IMR-90 (cell line): ENCODE measurements at regions of chrX and their contacts with region 1.

Region 1: GRCh38 chrX:8815464-8816065 is 14.4 kb upstream of the FAM9A start:
- DNase-seq: peak; percentile 40
- ATAC-seq: peak; percentile 88
- H3K4me3 ChIP-seq: no peak overlapping the region
- H3K27ac ChIP-seq: no peak overlapping the region
- H3K4me1 ChIP-seq: no peaks in the 10 kb centered on the region
- H3K27me3 ChIP-seq: no peaks in the 10 kb centered on the region; the same call in 1 of the 2 replicates
- CTCF ChIP-seq: peak; percentile 67
- POLR2A ChIP-seq: no peak
- RAD21 ChIP-seq: peak; percentile 63

Region 2: DNA sequence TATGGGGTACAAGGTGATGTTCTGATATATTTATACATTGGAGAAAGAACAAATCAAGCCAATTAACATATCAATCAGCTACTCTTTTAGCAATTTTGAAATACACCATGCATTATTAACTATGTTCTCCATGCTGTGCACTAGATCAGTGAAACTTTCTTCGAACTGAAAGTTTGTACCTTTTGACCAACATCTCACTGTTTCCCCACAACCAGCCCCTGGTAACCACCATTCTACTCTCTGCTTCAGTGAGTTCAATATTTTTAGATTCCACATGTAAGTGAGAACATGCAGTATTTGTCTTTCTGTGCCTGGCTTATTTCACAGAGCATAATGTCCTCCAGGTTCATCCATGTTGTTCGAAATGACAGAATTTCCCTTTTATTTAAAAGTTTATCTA is 1218.7 kb before region 1 on chrX:
- CTCF ChIA-PET with region 1: no interaction called
- POLR2A ChIA-PET with region 1: no interaction called
- dilution Hi-C with region 1: no loop called
- in situ Hi-C with region 1: no loop called
- intact Hi-C with region 1: no loop called
- DNase-seq: no peak
- ATAC-seq: no peak
- H3K4me3 ChIP-seq: no peak overlapping the region
- H3K27ac ChIP-seq: no peak overlapping the region
- H3K4me1 ChIP-seq: no peaks in the 10 kb centered on the region
- H3K27me3 ChIP-seq: no peaks in the 10 kb centered on the region
- CTCF ChIP-seq: no peak
- POLR2A ChIP-seq: no peak
- RAD21 ChIP-seq: no peak

Region 3: GRCh38 chrX:7996414-7996813 is 819.2 kb before region 1 on chrX:
- CTCF ChIA-PET with region 1: no interaction called
- POLR2A ChIA-PET with region 1: no interaction called
- dilution Hi-C with region 1: no loop called
- in situ Hi-C with region 1: no loop called
- intact Hi-C with region 1: loop called (anchors 2 kb)
- DNase-seq: peak; percentile 40
- ATAC-seq: peak; percentile 60
- H3K4me3 ChIP-seq: no peak overlapping the region
- H3K27ac ChIP-seq: no peak overlapping the region
- H3K4me1 ChIP-seq: no peaks in the 10 kb centered on the region
- H3K27me3 ChIP-seq: no peaks in the 10 kb centered on the region
- CTCF ChIP-seq: peak; percentile 58
- POLR2A ChIP-seq: no peak
- RAD21 ChIP-seq: peak; percentile 60

Region 4: DNA sequence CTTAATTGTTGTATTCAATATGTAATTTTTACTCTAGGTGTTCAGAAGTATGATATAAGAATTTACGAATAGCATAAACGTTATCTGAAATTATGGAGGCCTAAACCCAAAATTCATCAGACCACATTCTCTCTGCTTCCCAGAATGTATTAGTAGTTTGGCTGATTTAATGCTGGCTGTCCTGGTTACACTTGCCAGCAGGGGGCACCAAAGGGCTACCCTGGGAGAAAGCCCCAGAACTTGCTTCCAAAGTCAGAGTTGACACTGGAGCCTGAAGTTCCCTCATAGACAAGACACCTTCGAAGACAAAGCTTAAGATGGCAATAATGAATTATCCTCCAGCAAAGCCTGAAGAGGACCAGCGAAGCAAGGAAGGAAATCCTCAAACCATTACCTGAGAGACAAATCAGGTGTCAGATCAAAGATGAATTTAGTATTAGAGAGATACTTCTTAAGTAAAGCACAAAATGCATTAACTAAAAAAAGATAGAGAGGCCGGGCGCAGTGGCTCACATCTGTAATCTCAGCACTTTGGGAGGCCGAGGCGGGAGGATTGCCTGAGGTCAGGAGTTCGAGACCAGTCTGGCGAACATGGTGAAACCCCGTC is 72.3 kb before region 1 on chrX:
- CTCF ChIA-PET with region 1: interaction called, 5 read pairs
- POLR2A ChIA-PET with region 1: no interaction called
- dilution Hi-C with region 1: no loop called
- in situ Hi-C with region 1: loop called (anchors 10 kb)
- intact Hi-C with region 1: no loop called
- DNase-seq: peak; percentile 31
- ATAC-seq: no peak; the same call in 1 of the 2 replicates
- H3K4me3 ChIP-seq: no peak overlapping the region
- H3K27ac ChIP-seq: no peak overlapping the region
- H3K4me1 ChIP-seq: no peaks in the 10 kb centered on the region
- H3K27me3 ChIP-seq: no peaks in the 10 kb centered on the region
- CTCF ChIP-seq: peak; percentile 63
- POLR2A ChIP-seq: no peak
- RAD21 ChIP-seq: peak; percentile 48

Region 5: DNA sequence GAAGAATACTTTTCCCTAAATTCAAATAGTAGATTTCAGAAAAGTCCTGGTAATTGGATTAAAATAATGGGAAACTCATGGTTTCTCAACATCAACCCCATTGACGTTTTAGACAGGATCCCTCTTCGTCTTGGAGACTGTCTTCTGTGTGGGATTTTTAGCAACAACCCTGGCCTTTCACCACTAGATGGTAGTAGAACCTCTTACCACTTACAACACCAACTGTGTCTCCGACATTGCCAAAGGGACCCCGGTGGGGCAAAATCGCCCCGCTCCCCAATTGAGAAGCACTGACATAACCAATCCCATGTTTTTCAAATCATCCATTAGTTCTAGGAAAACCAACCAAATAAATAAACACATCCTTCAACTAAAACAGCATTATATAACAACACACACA is 66.7 kb before region 1 on chrX:
- CTCF ChIA-PET with region 1: interaction called, 5 read pairs
- POLR2A ChIA-PET with region 1: no interaction called
- dilution Hi-C with region 1: no loop called
- in situ Hi-C with region 1: loop called (anchors 10 kb)
- intact Hi-C with region 1: loop called (anchors 1 kb)
- DNase-seq: peak; percentile 43
- ATAC-seq: no peak
- H3K4me3 ChIP-seq: no peak overlapping the region
- H3K27ac ChIP-seq: no peak overlapping the region
- H3K4me1 ChIP-seq: no peaks in the 10 kb centered on the region
- H3K27me3 ChIP-seq: no peaks in the 10 kb centered on the region
- CTCF ChIP-seq: peak; percentile 49
- POLR2A ChIP-seq: no peak
- RAD21 ChIP-seq: peak; percentile 51

Region 6: DNA sequence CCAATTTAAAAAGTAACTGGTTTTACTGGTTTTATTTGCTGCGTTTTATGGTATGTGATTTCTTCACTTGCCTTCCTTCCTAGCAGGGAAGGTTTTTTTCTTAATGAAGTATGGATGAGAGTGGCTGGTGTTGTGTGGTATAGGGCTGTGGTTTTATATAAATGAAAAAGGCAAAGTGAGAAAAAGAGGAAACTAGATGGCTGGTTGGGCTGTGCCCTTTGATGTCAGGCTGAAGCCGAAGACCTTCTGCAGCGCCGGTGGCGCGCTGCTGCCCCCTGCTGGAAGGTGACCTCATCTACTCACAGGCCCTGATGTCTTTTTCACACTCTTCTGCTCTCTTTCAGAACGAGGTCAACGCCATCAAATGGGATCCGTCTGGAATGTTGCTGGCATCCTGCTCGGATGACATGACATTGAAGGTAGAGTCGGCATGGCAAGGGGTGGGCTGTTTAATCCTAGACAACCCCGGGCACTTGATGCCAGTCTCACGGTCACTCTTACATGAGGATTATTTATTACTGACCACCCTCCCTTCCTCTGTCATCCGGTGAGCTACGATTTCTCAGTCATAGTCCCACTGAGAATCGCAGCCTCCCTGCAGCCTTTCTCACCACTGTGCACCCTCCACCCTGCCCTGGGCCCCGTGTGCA is 893.5 kb after region 1 on chrX:
- CTCF ChIA-PET with region 1: no interaction called
- POLR2A ChIA-PET with region 1: no interaction called
- dilution Hi-C with region 1: no loop called
- in situ Hi-C with region 1: no loop called
- intact Hi-C with region 1: loop called (anchors 1 kb)
- DNase-seq: peak; percentile 55
- ATAC-seq: peak; percentile 91
- H3K4me3 ChIP-seq: no peak overlapping the region
- H3K27ac ChIP-seq: no peak overlapping the region
- H3K4me1 ChIP-seq: no peaks in the 10 kb centered on the region
- H3K27me3 ChIP-seq: no peaks in the 10 kb centered on the region
- CTCF ChIP-seq: peak; percentile 78
- POLR2A ChIP-seq: no peak
- RAD21 ChIP-seq: peak; percentile 84